ENCODE measurements at regions of chr10 and their contacts with region 1.

Region 1: DNA sequence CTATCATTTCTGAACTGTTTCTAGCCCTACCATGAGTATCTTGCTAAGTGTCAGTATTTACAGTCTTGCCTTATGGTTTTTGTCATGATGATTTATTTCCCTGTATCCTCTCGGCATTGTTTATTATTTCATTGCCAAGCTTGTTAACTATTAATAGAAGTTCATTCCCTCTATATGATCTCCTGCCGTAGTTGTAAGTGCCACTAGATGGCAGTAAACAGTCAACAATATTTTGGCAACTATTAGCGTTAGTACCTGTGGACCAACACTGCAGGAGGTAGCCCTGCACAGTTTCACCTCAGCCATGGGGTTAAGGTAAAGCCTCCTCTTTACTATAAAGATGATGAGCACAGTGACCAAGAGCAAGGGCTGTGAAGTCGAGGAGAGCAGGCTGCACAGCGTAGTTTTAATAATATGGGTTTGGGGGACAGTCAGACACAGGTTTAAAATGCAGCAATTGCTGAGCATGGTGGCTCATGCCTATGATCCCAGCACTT is 26.1 kb upstream of the CCNJ start:
- DNase-seq: peak; percentile 17 to 59
- H3K4me3 ChIP-seq: no peak overlapping the region
- H3K27ac ChIP-seq: no peak overlapping the region
- H3K4me1 ChIP-seq: no peaks in the 10 kb centered on the region
- H3K27me3 ChIP-seq: no peaks in the 10 kb centered on the region
- CTCF ChIP-seq: peak; percentile 71

Region 2: DNA sequence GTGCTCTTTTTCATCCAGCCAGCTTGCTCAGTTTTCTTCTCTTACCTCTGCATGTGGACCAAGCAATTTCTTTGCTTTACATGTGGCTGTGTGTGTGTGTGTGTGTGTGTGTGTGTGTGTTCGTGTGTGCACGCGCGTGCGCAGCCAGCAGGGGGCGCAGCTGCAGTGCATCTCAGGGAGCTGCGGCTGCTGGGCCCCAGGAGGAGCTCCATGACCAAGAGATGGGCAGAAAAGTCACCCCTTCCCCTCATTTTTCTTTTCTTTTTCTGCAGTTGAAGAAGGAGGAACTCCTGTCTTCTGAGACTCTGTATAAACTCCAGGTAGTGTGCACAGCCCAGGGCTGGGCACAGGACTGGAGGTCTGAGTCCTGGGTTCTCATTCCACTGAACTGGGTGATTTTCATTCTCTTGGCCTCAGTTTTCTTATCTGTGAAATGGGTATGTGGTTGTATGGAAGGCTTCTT is 212.4 kb after region 1 on chr10:
- CTCF ChIA-PET with region 1: interaction called, 5 read pairs
- POLR2A ChIA-PET with region 1: no interaction called
- intact Hi-C with region 1: loop called (anchors 10 kb)
- DNase-seq: peak in 1 of 2 experiments; percentile 37
- H3K4me3 ChIP-seq: no peak overlapping the region
- H3K27ac ChIP-seq: no peak overlapping the region
- H3K4me1 ChIP-seq: no peaks in the 10 kb centered on the region
- H3K27me3 ChIP-seq: no peaks in the 10 kb centered on the region
- CTCF ChIP-seq: peak; percentile 81

Region 3: GRCh38 chr10:96339957-96340904 is 323.0 kb after region 1 on chr10:
- CTCF ChIA-PET with region 1: no interaction called
- POLR2A ChIA-PET with region 1: no interaction called
- intact Hi-C with region 1: loop called (anchors 1 kb)
- DNase-seq: peak; percentile 44 to 46
- H3K4me3 ChIP-seq: no peak overlapping the region
- H3K27ac ChIP-seq: no peak overlapping the region
- H3K4me1 ChIP-seq: no peaks in the 10 kb centered on the region
- H3K27me3 ChIP-seq: no peaks in the 10 kb centered on the region; the same call in 1 of the 2 replicates
- CTCF ChIP-seq: peak; percentile 63

Measured in PC-9 (cell line).